Common myeloid progenitor, CD34-positive (primary cell): ENCODE measurements at regions of chr2 and their contacts with region 1.

Region 1: GRCh38 chr2:24075915-24076848 is at the start of gene SF3B6:
- DNase-seq: peak; percentile 99 to 100 (median 100)
- H3K4me3 ChIP-seq: peak within 1 kb of the TSS; percentile 80 to 99 (median 92)
- H3K27ac ChIP-seq: peak within 1 kb of the TSS; percentile 84 to 93
- H3K4me1 ChIP-seq: peaks cover 13 to 27% (median 19%) of the 10 kb centered on the region in 4 experiments
- H3K27me3 ChIP-seq: no peaks in the 10 kb centered on the region

Region 2: DNA sequence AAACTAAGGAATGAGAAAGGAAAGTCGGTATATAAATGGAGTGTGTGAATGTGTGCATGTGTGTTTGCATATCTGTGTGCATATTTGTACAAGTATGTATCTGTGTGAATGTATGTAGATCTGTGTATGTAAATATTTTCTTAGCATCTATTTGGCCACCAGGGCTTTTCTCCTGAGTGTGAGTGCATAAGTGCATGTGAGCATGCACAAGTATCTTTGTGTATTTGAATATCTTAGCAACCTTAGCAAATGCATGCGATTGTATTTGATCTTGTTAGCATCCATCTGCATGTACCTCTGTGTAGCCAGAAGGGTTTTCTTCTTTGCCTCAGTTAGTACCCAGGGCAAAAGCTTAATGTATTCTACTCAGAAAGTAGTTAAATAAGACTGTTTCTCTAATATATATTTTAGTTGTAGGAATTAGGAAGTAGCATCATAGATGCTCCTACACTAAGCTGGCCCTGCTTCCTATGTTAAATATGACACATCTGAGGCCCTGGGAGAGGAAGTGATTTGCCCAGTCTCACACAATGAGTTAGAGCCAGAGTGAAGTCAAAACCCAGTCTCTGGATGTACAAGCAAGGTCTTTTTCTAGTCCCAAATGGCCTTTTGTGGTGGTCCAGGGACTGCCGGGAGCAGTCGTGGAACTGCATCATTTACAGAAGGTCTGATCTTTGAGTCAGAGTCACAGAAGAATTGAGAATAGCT is 17.5 kb before region 1 on chr2:
- CTCF ChIA-PET with region 1: interaction called, 26 read pairs
- POLR2A ChIA-PET with region 1: no interaction called
- DNase-seq: peak in 1 of 3 donors; percentile 21
- H3K4me3 ChIP-seq: no peak overlapping the region
- H3K27ac ChIP-seq: no peak overlapping the region
- H3K4me1 ChIP-seq: no peaks in the 10 kb centered on the region
- H3K27me3 ChIP-seq: peaks cover 0 to 3% (median 0%) of the 10 kb centered on the region in 5 experiments

Region 3: DNA sequence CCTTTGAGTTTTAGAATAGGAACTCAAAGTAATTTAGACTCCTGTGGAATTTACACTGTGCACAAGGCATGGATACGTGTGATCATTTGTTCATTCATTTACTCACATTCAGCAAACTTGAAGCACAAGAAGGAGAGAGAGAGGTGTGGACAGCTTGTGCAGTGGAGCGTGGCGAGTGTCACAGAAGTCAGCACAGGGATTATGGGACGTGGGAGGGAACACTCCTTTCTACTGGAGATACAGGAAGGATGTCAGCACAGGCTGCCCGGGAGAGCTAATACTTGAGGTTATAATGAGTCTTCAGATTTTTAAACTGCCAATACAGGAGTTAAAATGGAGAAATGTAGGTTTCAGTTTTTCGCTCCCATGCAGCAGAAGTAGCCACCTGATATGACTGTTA is 105.7 kb after region 1 on chr2:
- CTCF ChIA-PET with region 1: no interaction called
- POLR2A ChIA-PET with region 1: no interaction called
- DNase-seq: no peak
- H3K4me3 ChIP-seq: no peak overlapping the region
- H3K27ac ChIP-seq: no peak overlapping the region
- H3K4me1 ChIP-seq: peaks cover 0 to 7% (median 0%) of the 10 kb centered on the region in 4 experiments
- H3K27me3 ChIP-seq: no peaks in the 10 kb centered on the region